Activated CD4-positive, alpha-beta T cell treated with anti-CD3 and anti-CD28 coated beads for 36 hours (primary cell): ENCODE measurements at regions of chr7 and their contacts with region 1.

Region 1: GRCh38 chr7:111873963-111874690 is 311.8 kb upstream of the IMMP2L start:
- DNase-seq: no peak
- ATAC-seq: no peak
- H3K4me3 Mint-ChIP-seq: no peak overlapping the region
- H3K27ac Mint-ChIP-seq: no peak overlapping the region
- H3K4me1 Mint-ChIP-seq: no peaks in the 10 kb centered on the region
- H3K27me3 Mint-ChIP-seq: no peaks in the 10 kb centered on the region

Region 2: GRCh38 chr7:111424768-111425167 is 449.4 kb before region 1 on chr7:
- CTCF ChIA-PET with region 1: no interaction called
- POLR2A ChIA-PET with region 1: no interaction called
- intact Hi-C with region 1: no loop called
- DNase-seq: no peak
- ATAC-seq: no peak
- H3K4me3 Mint-ChIP-seq: no peak overlapping the region
- H3K27ac Mint-ChIP-seq: no peak overlapping the region
- H3K4me1 Mint-ChIP-seq: no peaks in the 10 kb centered on the region
- H3K27me3 Mint-ChIP-seq: no peaks in the 10 kb centered on the region

Region 3: DNA sequence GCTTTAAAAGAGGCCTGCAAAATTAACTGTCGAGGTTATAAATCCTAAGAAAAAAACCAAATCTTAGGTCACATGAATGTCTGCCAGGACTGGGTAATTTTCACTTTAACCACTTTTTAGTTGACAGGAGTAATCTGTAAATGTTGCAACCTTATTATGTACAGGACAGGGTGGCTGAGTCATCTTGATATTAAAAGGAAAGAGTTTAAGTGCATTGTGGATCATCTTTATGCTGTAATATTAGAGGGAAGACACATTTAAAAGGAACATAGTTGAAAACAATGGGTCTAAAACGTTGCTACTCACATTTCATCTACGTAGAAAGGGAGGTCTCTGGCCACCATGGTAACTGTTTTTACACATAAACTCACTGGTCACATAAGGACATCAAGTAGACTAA is 722.1 kb after region 1 on chr7:
- CTCF ChIA-PET with region 1: no interaction called
- POLR2A ChIA-PET with region 1: interaction called, 11 read pairs
- intact Hi-C with region 1: no loop called
- DNase-seq: no peak
- ATAC-seq: no peak
- H3K4me3 Mint-ChIP-seq: no peak overlapping the region
- H3K27ac Mint-ChIP-seq: no peak overlapping the region
- H3K4me1 Mint-ChIP-seq: no peaks in the 10 kb centered on the region
- H3K27me3 Mint-ChIP-seq: no peaks in the 10 kb centered on the region